ENCODE measurements at regions of chr1 and their contacts with region 1.

Region 1: DNA sequence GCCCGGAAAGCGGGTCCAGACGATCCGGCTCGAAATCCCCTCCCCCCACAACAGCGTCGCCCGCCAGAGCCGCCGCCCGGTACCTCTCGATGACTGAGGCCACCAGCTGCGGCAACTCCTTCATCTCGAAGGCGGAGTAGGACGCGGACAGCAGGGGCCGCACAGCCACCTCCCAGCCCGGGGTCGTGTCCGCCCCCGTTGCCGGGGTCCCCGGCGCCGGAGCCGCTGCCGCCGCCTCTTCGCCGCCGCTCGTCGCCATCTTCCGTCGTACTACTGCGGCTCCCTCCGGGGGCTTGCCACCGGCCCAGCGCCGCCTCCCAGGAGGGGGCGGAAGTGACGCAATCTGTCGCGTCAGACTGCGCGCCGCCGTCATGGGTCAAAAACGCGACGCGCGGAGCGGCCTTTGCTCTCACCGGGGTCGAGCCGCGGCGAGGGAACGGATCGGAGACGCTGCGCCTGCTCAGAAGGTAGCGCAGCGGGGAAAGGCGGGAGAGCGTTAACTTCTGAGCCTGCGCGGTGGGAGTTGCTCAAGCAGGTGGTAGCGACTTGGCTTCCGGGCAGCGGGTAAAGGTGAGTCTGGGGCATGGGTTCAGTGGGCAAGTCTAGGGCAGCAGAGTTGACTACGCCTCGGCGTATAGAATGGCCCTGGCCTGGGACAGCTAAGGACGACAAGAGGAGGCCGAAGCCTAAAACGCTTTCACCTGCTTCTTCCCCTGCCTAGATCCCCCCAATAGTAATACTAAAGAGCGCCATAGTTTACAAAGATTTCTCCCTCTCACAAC is at the start of gene UBR4:
- DNase-seq: peak; percentile 98
- H3K4me3 ChIP-seq: peak within 1 kb of the TSS; percentile 74 to 98 (median 88)
- H3K27ac ChIP-seq: peak within 1 kb of the TSS; percentile 90 to 98 (median 96)
- H3K4me1 ChIP-seq: peaks cover 55 to 64% (median 60%) of the 10 kb centered on the region in 4 donors
- H3K27me3 ChIP-seq: no peaks in the 10 kb centered on the region
- CTCF ChIP-seq: peak in 1 of 3 experiments; percentile 6
- EP300 ChIP-seq: no peak
- POLR2A ChIP-seq: peak; percentile 89
- total RNA-seq, gene UBR4: 132 to 268 (median 170) TPM

Region 2: DNA sequence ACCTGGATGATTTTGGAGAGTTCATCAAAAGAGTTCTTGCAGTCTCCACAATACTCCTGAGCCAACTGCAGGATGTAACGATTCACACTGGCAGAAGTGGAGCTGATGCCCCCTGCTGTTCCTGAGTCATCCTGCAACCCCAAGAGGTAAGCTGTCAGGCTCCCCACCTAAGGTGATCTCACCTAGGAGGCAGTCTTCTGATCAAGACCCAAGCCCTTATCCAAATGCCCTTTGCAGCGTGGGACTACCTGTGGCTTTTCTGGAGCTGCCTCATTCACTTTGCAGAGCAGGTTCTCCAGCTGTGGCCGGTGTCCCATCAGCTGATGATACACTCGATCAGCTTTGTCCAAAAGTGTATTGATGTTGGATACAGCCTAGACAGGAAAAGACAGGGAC is 96.5 kb before region 1 on chr1:
- intact Hi-C with region 1: no loop called
- DNase-seq: no peak
- H3K4me3 ChIP-seq: no peak overlapping the region
- H3K27ac ChIP-seq: no peak overlapping the region
- H3K4me1 ChIP-seq: no peaks in the 10 kb centered on the region
- H3K27me3 ChIP-seq: no peaks in the 10 kb centered on the region
- CTCF ChIP-seq: peak in 1 of 3 experiments; percentile 19
- EP300 ChIP-seq: no peak
- POLR2A ChIP-seq: no peak

Region 3: GRCh38 chr1:19240673-19241538 is 30.7 kb after region 1 on chr1:
- intact Hi-C with region 1: loop called (anchors 5 kb)
- DNase-seq: no peak
- H3K4me3 ChIP-seq: no peak overlapping the region
- H3K27ac ChIP-seq: peak overlapping the region; percentile 56 to 68 (median 62)
- H3K4me1 ChIP-seq: peaks cover 3 to 9% (median 8%) of the 10 kb centered on the region in 4 donors
- H3K27me3 ChIP-seq: no peaks in the 10 kb centered on the region
- CTCF ChIP-seq: peak; percentile 96 to 98 (median 97)
- EP300 ChIP-seq: no peak
- POLR2A ChIP-seq: no peak

Region 4: GRCh38 chr1:19448491-19449439 is 238.6 kb after region 1 on chr1:
- intact Hi-C with region 1: no loop called
- DNase-seq: no peak
- H3K4me3 ChIP-seq: no peak overlapping the region
- H3K27ac ChIP-seq: peak overlapping the region; percentile 88 to 97 (median 92)
- H3K4me1 ChIP-seq: peaks cover 82 to 100% (median 100%) of the 10 kb centered on the region in 4 donors
- H3K27me3 ChIP-seq: no peaks in the 10 kb centered on the region
- CTCF ChIP-seq: no peak
- EP300 ChIP-seq: no peak
- POLR2A ChIP-seq: no peak